Caco-2 (cell line): ENCODE measurements at regions of chr20 and their contacts with region 1.

Region 1: DNA sequence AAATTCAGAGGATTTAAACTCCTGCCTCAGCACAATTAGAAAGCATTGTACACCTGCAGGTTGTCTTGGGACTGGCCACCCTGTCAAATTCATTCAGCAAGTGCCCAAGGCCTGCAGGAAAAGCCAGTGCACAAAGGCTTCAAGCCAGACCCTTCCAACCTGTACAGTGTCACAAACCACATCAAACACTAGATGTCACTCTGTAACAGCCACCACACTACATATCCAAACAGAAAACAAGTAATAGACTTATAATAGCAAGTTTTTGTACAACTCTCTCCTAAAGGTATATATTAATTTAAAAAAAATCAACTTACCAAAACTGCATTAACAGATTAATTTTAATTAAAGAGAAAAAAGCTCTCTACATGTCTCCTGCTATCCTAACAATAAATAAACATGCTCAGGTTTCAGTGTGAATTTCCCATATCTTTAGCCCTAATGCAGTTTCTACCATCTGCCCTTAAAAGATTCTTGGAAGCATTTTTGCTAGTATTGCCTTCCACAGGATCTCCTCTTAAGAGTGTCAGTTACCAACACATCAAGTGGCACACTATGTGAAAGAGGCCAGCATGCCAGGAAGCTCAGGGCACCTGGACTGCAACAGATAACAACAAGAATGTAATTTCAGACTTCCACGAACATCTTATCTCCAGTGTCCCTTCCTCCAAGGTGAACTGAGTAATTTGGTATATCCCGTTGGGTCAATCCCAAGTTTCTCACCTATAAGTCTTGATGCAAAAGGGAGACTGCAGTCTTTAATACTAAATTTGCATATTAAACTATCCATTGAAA is 47.5 kb downstream of the RALGAPA2 start:
- DNase-seq: peak in 1 of 2 experiments; percentile 34
- H3K4me3 ChIP-seq: no peak overlapping the region
- H3K4me3 Mint-ChIP-seq: no peak overlapping the region
- H3K27ac Mint-ChIP-seq: no peak overlapping the region
- H3K4me1 ChIP-seq: no peaks in the 10 kb centered on the region
- H3K4me1 Mint-ChIP-seq: no peaks in the 10 kb centered on the region
- H3K27me3 ChIP-seq: no peaks in the 10 kb centered on the region
- H3K27me3 Mint-ChIP-seq: no peaks in the 10 kb centered on the region
- CTCF ChIP-seq: peak; percentile 55 to 60

Region 2: GRCh38 chr20:20603339-20603990 is 61.5 kb before region 1 on chr20:
- CTCF ChIA-PET with region 1: no interaction called
- POLR2A ChIA-PET with region 1: no interaction called
- intact Hi-C with region 1: no loop called
- DNase-seq: no peak
- H3K4me3 ChIP-seq: no peak overlapping the region
- H3K4me3 Mint-ChIP-seq: no peak overlapping the region
- H3K27ac Mint-ChIP-seq: no peak overlapping the region
- H3K4me1 ChIP-seq: peaks cover 5% of the 10 kb centered on the region; the same call in 1 of the 2 replicates
- H3K4me1 Mint-ChIP-seq: no peaks in the 10 kb centered on the region
- H3K27me3 ChIP-seq: no peaks in the 10 kb centered on the region
- H3K27me3 Mint-ChIP-seq: no peaks in the 10 kb centered on the region
- CTCF ChIP-seq: no peak

Region 3: DNA sequence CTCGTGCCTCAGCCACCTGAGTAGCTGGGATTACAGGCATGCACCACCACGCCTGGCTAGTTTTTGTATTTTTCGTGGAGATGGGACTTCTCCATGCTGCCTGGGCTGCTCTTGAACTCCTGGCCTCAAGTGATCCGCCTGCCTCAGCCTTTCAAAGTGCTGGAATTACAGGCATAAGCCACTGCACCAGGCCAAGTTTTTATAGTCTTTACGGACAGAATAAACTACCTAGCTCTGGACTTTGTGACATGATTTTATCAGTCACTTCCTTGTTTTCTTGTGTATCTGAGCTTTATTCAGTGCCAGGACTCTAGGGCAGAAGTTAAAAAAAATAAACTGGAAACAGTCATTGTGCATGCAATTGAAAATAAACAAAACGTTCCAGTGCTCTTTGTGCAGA is 94.1 kb after region 1 on chr20:
- CTCF ChIA-PET with region 1: no interaction called
- POLR2A ChIA-PET with region 1: no interaction called
- intact Hi-C with region 1: no loop called
- DNase-seq: no peak
- H3K4me3 ChIP-seq: no peak overlapping the region
- H3K4me3 Mint-ChIP-seq: no peak overlapping the region
- H3K27ac Mint-ChIP-seq: no peak overlapping the region
- H3K4me1 ChIP-seq: no peaks in the 10 kb centered on the region
- H3K4me1 Mint-ChIP-seq: no peaks in the 10 kb centered on the region
- H3K27me3 ChIP-seq: no peaks in the 10 kb centered on the region
- H3K27me3 Mint-ChIP-seq: peaks cover 8% of the 10 kb centered on the region
- CTCF ChIP-seq: no peak

Region 4: DNA sequence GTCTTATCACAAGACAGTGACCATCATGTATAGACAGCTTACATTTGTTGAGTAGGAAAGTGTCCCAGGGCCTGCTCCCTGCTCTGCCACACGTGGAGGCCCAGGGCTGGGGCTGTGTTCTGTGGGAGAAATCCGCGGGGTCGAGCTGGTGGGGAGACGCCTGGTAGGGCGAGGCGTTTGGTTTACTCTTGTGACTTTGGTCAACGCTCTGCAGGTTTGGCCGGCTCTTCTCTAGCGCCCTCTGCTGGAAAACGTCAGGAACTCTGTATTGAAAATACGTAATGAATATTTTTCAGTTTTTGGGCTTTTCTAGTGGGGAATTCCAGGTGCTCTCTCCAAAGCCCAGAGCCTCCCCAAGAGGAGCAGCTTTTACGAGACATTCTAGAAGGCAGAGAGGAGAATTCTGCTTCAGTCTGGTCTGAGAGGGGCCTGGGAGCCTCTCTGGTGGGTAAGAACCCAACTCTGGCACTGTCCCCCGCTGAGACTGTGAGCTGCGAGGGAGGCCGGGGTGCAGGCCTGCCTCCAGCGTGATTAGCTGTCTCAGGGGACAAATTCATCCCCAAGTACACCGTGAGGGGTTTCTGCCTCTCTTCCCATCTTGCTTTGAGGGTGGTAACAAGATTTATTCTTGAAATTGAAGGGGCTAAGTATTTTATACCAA is 160.1 kb after region 1 on chr20:
- CTCF ChIA-PET with region 1: no interaction called
- POLR2A ChIA-PET with region 1: no interaction called
- intact Hi-C with region 1: loop called (anchors 1 kb)
- DNase-seq: peak; percentile 63 to 67
- H3K4me3 ChIP-seq: no peak overlapping the region
- H3K4me3 Mint-ChIP-seq: no peak overlapping the region
- H3K27ac Mint-ChIP-seq: no peak overlapping the region
- H3K4me1 ChIP-seq: peaks cover 5% of the 10 kb centered on the region; the same call in 1 of the 2 replicates
- H3K4me1 Mint-ChIP-seq: no peaks in the 10 kb centered on the region
- H3K27me3 ChIP-seq: no peaks in the 10 kb centered on the region
- H3K27me3 Mint-ChIP-seq: peaks cover 13% of the 10 kb centered on the region
- CTCF ChIP-seq: peak; percentile 77 to 80